Psoas muscle (tissue), 8 donors: ENCODE measurements at regions of chr19 and their contacts with region 1.

Region 1: GRCh38 chr19:40465557-40466150 is at the start of gene BLVRB:
- DNase-seq: peak; percentile 100
- ATAC-seq: peak; percentile 90 to 94 (median 92)
- H3K4me3 ChIP-seq: peak within 1 kb of the TSS; percentile 85
- H3K27ac ChIP-seq: peak within 1 kb of the TSS; percentile 94
- H3K4me1 ChIP-seq: peaks cover 12% of the 10 kb centered on the region
- H3K27me3 ChIP-seq: no peaks in the 10 kb centered on the region
- CTCF ChIP-seq: no peak
- total RNA-seq, gene BLVRB: 74.1 to 189 (median 114) TPM

Region 2: DNA sequence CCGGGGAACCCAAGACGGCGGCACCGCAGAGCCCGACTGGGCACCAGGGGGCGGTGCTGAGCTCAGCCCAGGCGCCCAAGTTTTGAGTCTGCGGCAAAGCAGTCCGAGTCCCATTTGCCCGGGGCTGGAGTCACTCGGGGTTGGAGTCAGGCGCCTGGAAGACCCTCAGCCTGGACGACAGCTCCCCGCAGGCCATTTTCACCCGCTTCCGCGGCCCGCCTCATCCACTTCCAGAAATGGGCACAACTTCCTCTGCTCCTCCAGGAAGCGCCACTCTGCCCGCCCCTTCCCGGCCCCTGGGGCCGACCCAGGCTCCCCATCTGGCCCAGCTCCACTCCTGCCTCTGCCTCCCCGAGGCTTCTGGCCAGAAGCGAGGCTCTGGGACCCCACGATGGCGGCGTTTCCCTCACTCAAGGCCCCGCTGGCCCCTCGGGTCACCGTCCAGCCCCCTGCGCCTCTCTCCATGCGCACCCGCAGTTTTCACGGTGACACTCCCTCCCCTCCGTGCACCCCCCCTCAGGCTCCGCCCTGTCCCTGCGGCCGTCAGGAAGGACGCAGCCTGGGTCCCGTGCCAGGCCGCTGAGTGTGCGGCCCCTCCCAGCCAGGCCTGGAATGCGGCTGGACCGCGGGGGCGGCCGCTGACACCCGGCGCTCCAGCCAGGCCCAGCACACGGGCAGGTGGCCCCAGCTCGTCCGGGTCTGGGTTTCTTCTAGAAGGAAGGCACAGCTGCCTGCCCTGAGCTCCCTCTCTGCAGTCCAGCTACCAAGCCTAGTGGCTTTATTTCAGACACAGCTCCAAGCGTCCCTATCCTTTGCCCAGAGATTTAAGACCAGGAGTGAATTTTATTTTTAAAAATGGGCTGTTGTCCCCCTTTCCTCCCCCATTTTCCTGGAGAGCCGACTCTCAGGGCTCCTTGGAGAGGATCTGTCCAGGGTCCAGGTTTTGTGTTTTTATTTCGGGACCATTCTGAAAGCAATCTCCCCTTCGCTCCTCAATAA is 44.6 kb before region 1 on chr19:
- intact Hi-C with region 1: loop called in 1 of 2 experiments (anchors 2 kb)
- DNase-seq: peak; percentile 97 to 98
- ATAC-seq: peak; percentile 82 to 86 (median 84)
- H3K4me3 ChIP-seq: peak overlapping the region; percentile 88
- H3K27ac ChIP-seq: peak overlapping the region; percentile 99
- H3K4me1 ChIP-seq: peaks cover 32% of the 10 kb centered on the region
- H3K27me3 ChIP-seq: no peaks in the 10 kb centered on the region
- CTCF ChIP-seq: peak; percentile 93